Dorsolateral prefrontal cortex (tissue), 120 donors: ENCODE measurements at regions of chr10 and their contacts with region 1.

Region 1: GRCh38 chr10:111076191-111076681 is 593 bp upstream of the ADRA2A start:
- DNase-seq: peak in 9 of 10 donors; percentile 53 to 83 (median 71)
- H3K4me3 ChIP-seq: peak overlapping the region; percentile 41 to 81 (median 59)
- H3K27ac ChIP-seq: peak overlapping the region in 14 of 59 donors; percentile 4 to 70 (median 37)
- H3K27me3 ChIP-seq: peaks cover 0 to 75% (median 27%) of the 10 kb centered on the region in 45 donors
- CTCF ChIP-seq: peak; percentile 40 to 92 (median 82)

Region 2: DNA sequence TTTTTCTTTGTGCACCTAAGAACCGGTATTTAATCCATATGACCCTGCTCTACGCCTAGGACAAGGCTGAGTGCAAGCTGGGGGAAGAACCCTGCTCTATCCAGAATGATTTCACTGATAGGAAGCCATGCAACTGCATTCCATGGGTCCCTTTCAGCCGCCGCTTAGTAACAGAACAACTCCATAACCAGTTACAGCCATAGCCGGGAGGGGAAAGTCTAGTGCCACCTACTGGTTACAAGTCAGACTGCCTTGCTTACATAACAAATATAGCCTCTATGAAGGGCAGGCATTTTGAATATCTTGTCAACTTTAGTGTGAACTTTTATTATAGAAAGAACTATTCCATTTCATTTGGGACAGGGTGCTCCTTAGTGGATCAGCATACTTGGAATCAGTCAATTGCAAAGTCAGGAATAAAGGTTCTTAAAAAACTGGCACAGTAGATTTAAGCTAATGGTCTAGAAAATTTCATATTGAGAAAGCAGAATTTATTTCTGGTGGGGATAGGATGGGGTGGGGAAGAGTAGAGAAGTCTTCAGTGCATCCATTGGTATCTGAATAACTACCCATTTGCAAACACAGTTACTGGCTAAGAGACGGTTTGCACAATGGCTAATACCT is 522.3 kb after region 1 on chr10:
- intact Hi-C with region 1: loop called in 1 of 2 experiments (anchors 5 kb)
- DNase-seq: peak in 3 of 10 donors; percentile 18 to 58 (median 36)
- H3K4me3 ChIP-seq: no peak overlapping the region
- H3K27ac ChIP-seq: no peak overlapping the region
- H3K27me3 ChIP-seq: no peaks in the 10 kb centered on the region
- CTCF ChIP-seq: peak; percentile 45 to 88 (median 76)